HEK293 (cell line): ENCODE measurements at regions of chr5 and their contacts with region 1.

Region 1: DNA sequence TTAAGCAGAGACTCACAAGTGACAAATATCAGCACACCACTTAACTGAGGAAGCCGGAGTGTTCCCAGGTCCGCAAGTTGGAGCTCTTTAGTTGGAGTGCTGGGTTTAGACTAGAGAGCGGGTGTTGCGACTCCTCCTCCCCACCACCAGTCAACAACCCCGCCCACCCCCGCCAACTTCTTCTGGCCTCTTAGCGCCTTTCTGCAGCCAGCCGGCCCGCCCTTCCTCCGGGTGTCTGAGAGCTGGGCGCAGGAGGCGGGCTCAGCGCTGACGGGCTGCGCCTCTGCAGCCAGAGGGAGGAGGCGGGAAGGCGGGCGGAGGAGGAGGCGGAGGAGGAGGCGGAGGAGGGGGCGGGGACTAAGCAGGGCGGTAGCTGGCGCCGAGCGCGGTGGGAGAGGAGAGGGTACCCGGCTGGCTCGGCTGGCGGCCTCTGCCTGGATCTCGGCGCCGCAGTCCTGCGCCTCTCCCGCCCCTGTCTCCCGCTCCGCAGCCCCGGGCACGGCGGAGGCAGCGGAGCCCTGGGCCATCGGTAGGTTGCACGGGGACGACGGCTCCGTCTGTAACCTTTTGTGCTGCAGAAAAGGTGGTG is at the start of gene MACIR:
- H3K4me3 ChIP-seq: peak within 1 kb of the TSS; percentile 94
- H3K27ac ChIP-seq: peak within 1 kb of the TSS; percentile 94
- H3K4me1 ChIP-seq: no peaks in the 10 kb centered on the region
- CTCF ChIP-seq: no peak

Region 2: GRCh38 chr5:103119765-103120606 is 138.5 kb before region 1 on chr5 and contains the starts of genes GIN1 and PPIP5K2:
- CTCF ChIA-PET with region 1: no interaction called
- POLR2A ChIA-PET with region 1: interaction called, 22 read pairs
- H3K4me3 ChIP-seq: peak within 1 kb of the TSS; percentile 93
- H3K27ac ChIP-seq: peak within 1 kb of the TSS; percentile 90
- H3K4me1 ChIP-seq: peaks cover 5% of the 10 kb centered on the region; the same call in 1 of the 2 replicates
- CTCF ChIP-seq: no peak

Region 3: GRCh38 chr5:103224118-103224893 is 34.2 kb before region 1 on chr5:
- CTCF ChIA-PET with region 1: interaction called, 3 read pairs
- POLR2A ChIA-PET with region 1: interaction called, 11 read pairs
- H3K4me3 ChIP-seq: no peak overlapping the region
- H3K27ac ChIP-seq: no peak overlapping the region
- H3K4me1 ChIP-seq: no peaks in the 10 kb centered on the region
- CTCF ChIP-seq: no peak

Region 4: DNA sequence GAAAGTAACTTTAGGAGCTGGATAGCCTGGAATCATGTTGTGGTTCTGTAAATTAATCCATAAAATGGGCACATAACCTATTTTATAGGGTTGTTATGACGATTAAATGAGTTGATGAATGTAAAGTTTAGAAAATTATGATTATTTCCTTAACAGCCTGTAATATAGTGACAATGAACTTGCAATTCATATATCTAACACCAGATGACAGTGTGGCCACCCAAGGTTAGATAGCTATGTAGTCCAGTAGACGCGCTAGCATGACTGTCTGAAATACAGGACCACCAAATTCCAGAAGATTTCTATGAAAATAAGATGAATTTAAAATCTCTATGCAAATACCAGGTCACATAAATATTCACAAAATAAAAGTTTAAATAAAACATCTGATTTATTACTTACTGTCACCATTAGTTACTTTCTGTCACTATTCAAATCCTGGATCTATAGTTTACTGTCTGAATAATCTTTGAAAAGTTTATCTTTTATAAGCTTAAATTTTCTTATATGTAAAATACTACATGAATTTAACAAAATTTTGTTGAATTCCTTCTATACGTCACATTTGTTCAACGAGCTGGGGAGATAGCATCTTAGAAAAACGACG is 26.0 kb before region 1 on chr5:
- CTCF ChIA-PET with region 1: interaction called, 4 read pairs
- POLR2A ChIA-PET with region 1: interaction called, 10 read pairs
- H3K4me3 ChIP-seq: no peak overlapping the region
- H3K27ac ChIP-seq: no peak overlapping the region
- H3K4me1 ChIP-seq: no peaks in the 10 kb centered on the region
- CTCF ChIP-seq: no peak

Region 5: DNA sequence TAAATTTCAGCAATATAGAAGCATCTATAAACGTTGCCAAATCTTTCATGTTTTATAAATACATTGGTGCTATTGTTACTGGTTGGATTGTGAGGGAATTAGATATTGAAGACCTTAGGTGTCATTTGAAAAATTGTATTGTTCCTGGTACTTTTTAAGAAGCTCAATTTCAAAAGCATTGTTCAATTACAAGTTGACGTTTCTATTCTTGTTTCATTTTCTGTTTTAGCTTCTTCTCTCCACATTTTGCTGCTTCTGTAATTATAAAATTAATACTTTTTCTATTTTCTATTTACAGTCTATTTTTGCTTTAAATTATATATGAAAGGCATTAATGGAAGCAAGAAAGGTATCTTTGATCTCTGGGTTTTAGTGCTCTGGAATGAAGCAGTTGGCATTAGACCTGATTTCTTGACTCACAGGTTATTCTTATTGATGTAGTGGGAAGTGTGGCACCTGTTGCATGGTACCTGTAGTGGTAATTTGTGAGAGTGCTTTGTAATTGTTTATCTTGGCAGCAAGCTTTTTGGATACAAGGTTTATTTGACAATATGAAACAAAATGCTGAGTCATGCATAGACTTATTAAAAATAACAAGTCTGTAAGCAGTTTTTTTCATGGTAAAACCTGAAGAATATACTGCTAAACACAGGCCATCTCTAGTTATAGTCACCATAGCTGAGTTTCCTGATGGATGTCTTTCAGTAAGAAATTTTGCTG is 13.3 kb after region 1 on chr5:
- CTCF ChIA-PET with region 1: no interaction called
- POLR2A ChIA-PET with region 1: interaction called, 11 read pairs
- H3K4me3 ChIP-seq: no peak overlapping the region
- H3K27ac ChIP-seq: no peak overlapping the region
- H3K4me1 ChIP-seq: peaks cover 10% of the 10 kb centered on the region
- CTCF ChIP-seq: no peak

Region 6: DNA sequence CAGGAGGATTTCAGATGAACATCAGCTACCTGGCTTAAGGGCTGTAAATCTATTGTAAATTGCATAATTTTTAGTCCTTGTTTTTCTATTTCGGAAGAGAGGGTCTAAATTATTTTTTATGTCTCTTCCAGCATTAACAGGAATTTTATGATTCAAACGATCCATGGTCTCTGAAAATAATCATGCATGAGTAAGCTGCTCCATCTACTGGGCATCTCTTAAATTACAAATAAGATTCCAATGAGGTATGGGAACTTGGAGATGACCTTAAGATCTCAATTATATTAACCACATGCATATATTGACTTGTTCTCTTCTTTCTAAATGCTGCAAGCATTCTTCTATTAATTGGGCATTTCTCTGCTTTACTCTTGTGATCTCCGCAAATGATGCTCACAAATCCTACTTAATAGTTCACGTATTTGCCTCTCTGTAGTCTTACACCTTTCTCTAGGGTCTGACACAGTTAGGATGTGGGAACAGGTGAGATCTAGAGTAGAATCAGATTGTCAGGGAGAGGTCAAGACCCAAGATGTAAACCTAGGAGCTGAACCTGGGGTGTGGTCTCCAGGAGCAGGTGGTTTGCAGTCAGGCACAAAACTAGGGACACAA is 217.3 kb after region 1 on chr5:
- CTCF ChIA-PET with region 1: no interaction called
- POLR2A ChIA-PET with region 1: interaction called, 14 read pairs
- H3K4me3 ChIP-seq: no peak overlapping the region
- H3K27ac ChIP-seq: no peak overlapping the region
- H3K4me1 ChIP-seq: no peaks in the 10 kb centered on the region
- CTCF ChIP-seq: no peak